ENCODE measurements at regions of chr1 and their contacts with region 1.

Region 1: DNA sequence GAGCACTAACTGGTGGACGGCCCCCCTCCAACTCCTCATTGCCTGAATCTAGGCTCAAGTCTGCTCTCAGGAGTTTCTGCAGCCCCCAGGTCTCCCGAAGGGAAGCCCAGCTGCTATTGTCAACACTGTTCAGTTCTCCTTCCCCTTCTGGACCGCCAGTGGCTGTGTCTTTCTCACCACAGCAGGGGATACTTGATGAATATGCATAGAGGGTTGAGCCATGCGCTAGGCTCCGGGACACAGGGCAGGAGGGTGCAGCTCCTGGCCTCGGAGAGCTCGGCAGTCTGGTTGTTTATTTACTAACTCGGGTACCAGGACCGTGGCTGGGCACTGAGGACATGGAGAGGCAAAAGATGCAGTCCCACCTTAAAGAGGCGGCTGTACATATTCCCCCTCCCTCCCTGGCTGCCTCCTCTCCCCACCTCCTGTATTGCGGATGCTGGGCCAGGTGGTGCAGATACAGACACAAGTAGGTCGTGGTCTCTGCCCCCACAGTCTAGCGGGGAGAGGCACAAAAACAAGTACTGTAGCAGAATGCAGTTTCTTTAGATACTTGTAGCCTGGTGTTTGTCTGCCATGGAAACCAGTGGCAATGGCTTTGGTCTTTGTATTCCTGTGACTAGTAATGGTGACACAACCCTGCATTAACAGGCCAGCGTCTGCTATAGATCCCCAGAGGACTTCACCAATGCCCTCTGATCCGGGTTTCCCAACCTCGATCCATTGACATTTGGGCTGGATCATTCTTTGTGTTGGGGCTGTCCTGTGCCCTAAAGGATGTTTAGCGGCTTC is 26.2 kb downstream of the ARHGEF10L start:
- DNase-seq: no peak
- ATAC-seq: no peak
- H3K4me3 ChIP-seq: no peak overlapping the region
- H3K4me3 Mint-ChIP-seq: no peak overlapping the region
- H3K27ac ChIP-seq: no peak overlapping the region
- H3K27ac Mint-ChIP-seq: no peak overlapping the region
- H3K4me1 ChIP-seq: no peaks in the 10 kb centered on the region
- H3K4me1 Mint-ChIP-seq: no peaks in the 10 kb centered on the region
- H3K27me3 ChIP-seq: no peaks in the 10 kb centered on the region
- H3K27me3 Mint-ChIP-seq: peaks cover 4 to 7% of the 10 kb centered on the region in 2 donors
- CTCF ChIP-seq: no peak

Region 2: GRCh38 chr1:17594690-17595600 is 29.3 kb after region 1 on chr1:
- intact Hi-C with region 1: loop called (anchors 1 kb)
- DNase-seq: no peak
- ATAC-seq: no peak
- H3K4me3 ChIP-seq: no peak overlapping the region
- H3K4me3 Mint-ChIP-seq: no peak overlapping the region
- H3K27ac ChIP-seq: no peak overlapping the region
- H3K27ac Mint-ChIP-seq: no peak overlapping the region
- H3K4me1 ChIP-seq: no peaks in the 10 kb centered on the region
- H3K4me1 Mint-ChIP-seq: no peaks in the 10 kb centered on the region
- H3K27me3 ChIP-seq: no peaks in the 10 kb centered on the region
- H3K27me3 Mint-ChIP-seq: no peaks in the 10 kb centered on the region
- CTCF ChIP-seq: no peak

Measured in natural killer cell (primary cell).